ENCODE measurements at regions of chr6 and their contacts with region 1.

Region 1: GRCh38 chr6:138115877-138116660 is 8.8 kb upstream of the PERP start:
- DNase-seq: no peak
- H3K4me3 ChIP-seq: no peak overlapping the region
- H3K27ac ChIP-seq: no peak overlapping the region
- H3K4me1 ChIP-seq: peaks cover 0 to 4% (median 0%) of the 10 kb centered on the region in 4 donors
- H3K27me3 ChIP-seq: peaks cover 0 to 10% (median 0%) of the 10 kb centered on the region in 4 donors
- CTCF ChIP-seq: peak; percentile 63 to 79 (median 70)
- EP300 ChIP-seq: no peak
- POLR2A ChIP-seq: no peak

Region 2: GRCh38 chr6:138287144-138287955 is 171.3 kb after region 1 on chr6:
- intact Hi-C with region 1: loop called (anchors 5 kb)
- DNase-seq: no peak
- H3K4me3 ChIP-seq: no peak overlapping the region
- H3K27ac ChIP-seq: no peak overlapping the region
- H3K4me1 ChIP-seq: no peaks in the 10 kb centered on the region
- H3K27me3 ChIP-seq: no peaks in the 10 kb centered on the region
- CTCF ChIP-seq: peak; percentile 46 to 53 (median 46)
- EP300 ChIP-seq: no peak
- POLR2A ChIP-seq: no peak

Region 3: DNA sequence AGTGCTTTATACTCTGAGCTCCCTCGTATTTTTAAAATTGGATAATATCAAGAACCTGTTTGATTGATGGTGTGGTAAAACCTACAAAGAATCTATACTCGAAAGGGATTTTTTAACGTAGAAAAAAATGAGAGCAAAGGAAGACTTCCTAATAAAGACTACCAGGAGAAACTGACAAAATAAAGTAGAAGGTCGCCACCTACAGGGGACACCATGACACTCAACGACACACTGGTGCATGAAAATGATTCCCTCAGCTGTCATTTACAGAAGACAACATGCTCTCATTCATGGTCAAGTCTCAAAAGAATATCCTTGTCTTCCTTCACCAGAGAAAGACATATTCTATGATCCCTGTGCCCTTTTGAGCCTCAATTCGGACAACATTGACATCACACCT is 393.3 kb after region 1 on chr6:
- intact Hi-C with region 1: loop called (anchors 5 kb)
- DNase-seq: no peak
- H3K4me3 ChIP-seq: no peak overlapping the region
- H3K27ac ChIP-seq: no peak overlapping the region
- H3K4me1 ChIP-seq: no peaks in the 10 kb centered on the region
- H3K27me3 ChIP-seq: no peaks in the 10 kb centered on the region
- CTCF ChIP-seq: peak; percentile 68 to 74 (median 68)
- EP300 ChIP-seq: no peak
- POLR2A ChIP-seq: no peak